SK-N-SH (cell line): ENCODE measurements at regions of chr12 and their contacts with region 1.

Region 1: GRCh38 chr12:57590536-57591479 is at the start of gene PIP4K2C:
- DNase-seq: peak; percentile 90
- H3K4me3 ChIP-seq: peak within 1 kb of the TSS; percentile 89 to 92
- H3K27ac ChIP-seq: peak within 1 kb of the TSS; percentile 6 to 47; a peak in 2 of 4 replicates
- H3K4me1 ChIP-seq: peaks cover 8 to 14% of the 10 kb centered on the region in 2 experiments; a peak in 2 of 4 replicates
- H3K27me3 ChIP-seq: no peaks in the 10 kb centered on the region
- CTCF ChIP-seq: no peak
- EP300 ChIP-seq: no peak
- RAD21 ChIP-seq: no peak
- polyA plus RNA-seq, gene PIP4K2C: 34.2 and 40.1 TPM in 2 replicates

Region 2: DNA sequence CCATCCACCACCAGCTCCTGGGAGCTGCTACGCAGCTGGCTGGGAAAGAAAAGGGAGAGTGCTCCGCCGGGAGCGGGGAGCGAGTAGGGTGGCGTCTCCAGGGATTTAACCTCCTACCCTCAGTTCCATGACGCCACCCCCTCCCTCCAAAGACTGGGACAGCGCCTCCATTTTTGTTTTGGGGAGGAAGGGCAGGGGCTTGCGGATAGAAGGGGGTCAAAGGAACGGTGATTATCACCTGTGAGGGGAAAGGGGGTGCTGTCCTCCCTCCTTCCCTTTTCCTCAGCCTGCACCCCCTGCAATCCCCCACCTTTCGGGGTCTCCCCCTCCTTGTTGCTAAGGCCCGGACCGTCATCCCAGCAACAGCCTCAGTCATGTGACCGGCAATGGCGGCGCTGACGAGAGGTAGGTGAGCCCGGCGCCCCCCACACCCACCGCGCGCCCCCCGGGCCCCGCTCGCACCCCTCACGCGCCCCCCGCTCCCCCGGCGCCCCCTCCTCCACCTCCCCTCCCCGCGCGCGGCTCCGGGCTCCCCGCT is 13.7 kb after region 1 on chr12 and contains the start of gene DTX3:
- CTCF ChIA-PET with region 1: interaction called, 65 read pairs
- POLR2A ChIA-PET with region 1: interaction called, 7 read pairs
- DNase-seq: peak; percentile 84
- H3K4me3 ChIP-seq: peak within 1 kb of the TSS; percentile 86 to 91
- H3K27ac ChIP-seq: peak within 1 kb of the TSS; percentile 61 to 97
- H3K4me1 ChIP-seq: peaks cover 9 to 17% of the 10 kb centered on the region in 2 experiments; a peak in 3 of 4 replicates
- H3K27me3 ChIP-seq: no peaks in the 10 kb centered on the region
- CTCF ChIP-seq: no peak
- EP300 ChIP-seq: no peak
- RAD21 ChIP-seq: no peak
- polyA plus RNA-seq, gene DTX3: 61.2 and 62.6 TPM in 2 replicates

Region 3: DNA sequence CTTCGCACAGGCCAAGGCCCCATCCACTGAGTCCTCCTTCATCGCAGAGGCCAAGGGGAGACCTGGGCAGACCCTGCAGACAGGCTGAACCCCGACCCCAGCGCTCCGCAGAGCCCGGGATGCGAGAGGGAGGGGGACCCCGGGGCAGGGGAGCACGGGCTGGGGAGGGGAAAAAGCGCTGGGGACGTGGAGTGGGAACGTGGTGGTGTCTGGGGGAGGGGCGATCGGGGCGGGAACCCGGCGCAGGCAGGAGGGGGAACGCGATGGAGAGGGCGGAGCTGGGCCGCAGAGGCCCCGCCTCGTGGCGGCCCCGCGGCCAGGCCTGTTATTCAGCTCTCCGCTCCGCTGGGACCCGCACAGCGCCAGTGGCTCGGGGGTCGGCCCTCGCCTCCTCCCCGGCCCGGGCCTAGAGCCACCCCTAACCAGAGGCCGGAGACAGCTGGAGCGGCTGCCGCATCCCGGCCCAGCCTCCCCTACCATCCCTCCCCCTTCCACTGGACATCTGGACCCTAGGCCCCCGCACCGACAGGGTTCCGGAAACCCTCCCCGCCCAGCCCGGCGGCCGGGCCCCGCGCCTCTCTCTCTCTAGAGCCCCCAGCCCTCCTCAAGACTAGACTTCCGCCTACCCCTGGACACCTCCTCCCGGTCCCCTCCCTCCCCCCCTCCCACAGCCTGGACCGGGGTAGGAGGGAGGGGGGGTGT is 20.5 kb after region 1 on chr12 and contains the start of gene ARHGEF25:
- CTCF ChIA-PET with region 1: interaction called, 90 read pairs
- POLR2A ChIA-PET with region 1: interaction called, 21 read pairs
- DNase-seq: peak; percentile 97
- H3K4me3 ChIP-seq: peak within 1 kb of the TSS; percentile 51 to 75
- H3K27ac ChIP-seq: peak within 1 kb of the TSS; percentile 36 to 86; a peak in 3 of 4 replicates
- H3K4me1 ChIP-seq: peaks cover 5 to 29% of the 10 kb centered on the region in 2 experiments; a peak in 2 of 4 replicates
- H3K27me3 ChIP-seq: no peaks in the 10 kb centered on the region
- CTCF ChIP-seq: no peak
- EP300 ChIP-seq: no peak
- RAD21 ChIP-seq: no peak
- polyA plus RNA-seq, gene ARHGEF25: 48.1 and 51.6 TPM in 2 replicates